ENCODE measurements at regions of chr13 and their contacts with region 1.

Region 1: DNA sequence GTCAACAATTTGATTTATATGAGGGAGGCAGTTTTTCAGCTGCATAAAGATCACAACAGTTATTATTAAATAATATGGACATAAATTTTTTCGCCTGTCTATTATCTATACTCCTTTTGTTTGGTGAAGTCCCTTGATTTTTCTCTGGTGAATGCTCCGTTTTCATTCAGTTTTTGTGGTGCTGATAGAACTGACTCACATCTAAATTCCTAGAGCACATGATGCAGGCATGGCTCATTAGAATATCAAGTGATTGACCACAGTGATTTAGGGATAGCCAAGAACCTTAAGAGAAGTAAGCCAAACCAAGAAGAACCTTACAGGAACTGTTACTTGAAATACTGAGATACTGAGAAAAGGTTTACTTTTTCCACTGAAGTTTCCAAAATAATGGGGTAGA is 208.9 kb downstream of the PRR20E start:
- DNase-seq: no peak
- ATAC-seq: no peak
- H3K4me3 ChIP-seq: no peak overlapping the region
- H3K27ac ChIP-seq: no peak overlapping the region
- H3K4me1 ChIP-seq: no peaks in the 10 kb centered on the region
- H3K27me3 ChIP-seq: no peaks in the 10 kb centered on the region

Region 2: GRCh38 chr13:57437587-57437986 is 61.7 kb after region 1 on chr13:
- intact Hi-C with region 1: loop called in 1 of 4 experiments (anchors 10 kb)
- DNase-seq: no peak
- ATAC-seq: no peak
- H3K4me3 ChIP-seq: no peak overlapping the region
- H3K27ac ChIP-seq: no peak overlapping the region
- H3K4me1 ChIP-seq: no peaks in the 10 kb centered on the region
- H3K27me3 ChIP-seq: no peaks in the 10 kb centered on the region

Region 3: DNA sequence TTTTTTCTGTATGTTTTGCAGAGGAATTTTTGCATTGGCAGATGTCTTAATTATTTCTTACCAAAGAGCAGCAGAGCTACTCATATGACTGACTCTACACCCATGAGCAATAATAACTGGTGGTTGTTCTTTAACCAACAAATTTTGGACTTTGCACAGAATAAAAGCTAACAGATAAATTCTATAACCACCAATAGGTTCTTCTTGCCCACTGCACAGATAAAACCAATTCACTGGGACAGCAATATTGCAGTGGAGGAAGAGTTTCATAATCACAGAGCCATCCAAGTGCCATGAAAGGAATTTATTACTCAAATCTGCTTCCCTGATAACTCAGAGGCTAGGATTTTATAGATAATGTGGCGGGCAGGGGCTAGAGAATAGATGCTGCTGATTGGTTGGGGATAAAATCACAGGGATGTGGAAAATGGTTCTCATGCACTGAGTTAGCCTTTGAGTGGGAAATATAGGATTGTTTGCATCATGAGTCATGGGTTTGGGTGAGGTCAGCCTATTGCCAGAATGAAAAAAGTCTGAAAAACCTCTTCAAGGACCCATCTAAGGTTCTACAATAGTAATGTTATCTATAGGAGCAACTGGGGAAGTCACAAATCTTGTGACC is 151.3 kb after region 1 on chr13:
- intact Hi-C with region 1: no loop called
- DNase-seq: no peak
- ATAC-seq: no peak
- H3K4me3 ChIP-seq: no peak overlapping the region
- H3K27ac ChIP-seq: no peak overlapping the region
- H3K4me1 ChIP-seq: no peaks in the 10 kb centered on the region
- H3K27me3 ChIP-seq: no peaks in the 10 kb centered on the region